ENCODE measurements at regions of chr9 and their contacts with region 1.

Region 1: DNA sequence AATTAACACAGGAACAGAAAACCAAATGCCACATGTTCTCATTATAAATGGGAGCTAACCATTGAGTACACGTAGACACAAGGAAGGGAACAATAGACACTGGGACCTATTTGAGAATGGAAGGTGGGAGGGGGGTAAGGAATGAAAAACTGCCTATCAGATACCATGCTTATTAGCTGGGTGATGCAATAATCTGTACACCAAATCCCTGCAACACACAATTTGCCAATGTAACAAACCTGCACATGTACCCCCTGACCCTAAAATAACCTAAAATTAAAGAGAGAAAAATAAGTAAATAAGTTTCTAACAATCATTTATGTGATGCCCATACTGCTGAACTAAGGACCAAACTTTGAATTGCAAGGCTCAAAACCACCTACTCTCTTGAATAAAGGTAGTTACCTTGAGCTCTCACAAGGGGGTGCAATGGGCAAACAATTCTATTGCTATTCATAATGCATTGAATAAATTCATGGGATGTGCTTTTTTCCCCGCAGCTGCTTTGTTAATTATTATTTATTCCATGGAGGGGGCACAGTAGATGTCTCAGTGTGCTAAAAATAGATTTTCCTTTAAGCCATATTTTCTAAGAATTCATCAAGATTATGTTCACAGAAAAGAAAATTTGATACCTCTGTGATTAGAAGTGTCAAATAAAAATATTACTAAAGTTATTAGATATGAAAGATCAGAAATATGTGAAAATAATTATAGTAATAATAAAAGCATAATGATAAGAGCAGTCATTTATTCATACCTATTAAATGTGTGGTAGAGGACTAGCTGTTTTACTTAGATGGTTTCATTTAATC is 76.2 kb upstream of the PTPN3 start:
- DNase-seq: peak; percentile 74
- H3K4me3 ChIP-seq: no peak overlapping the region
- H3K27ac ChIP-seq: no peak overlapping the region
- H3K4me1 ChIP-seq: no peaks in the 10 kb centered on the region
- H3K27me3 ChIP-seq: no peaks in the 10 kb centered on the region
- CTCF ChIP-seq: peak; percentile 70

Region 2: DNA sequence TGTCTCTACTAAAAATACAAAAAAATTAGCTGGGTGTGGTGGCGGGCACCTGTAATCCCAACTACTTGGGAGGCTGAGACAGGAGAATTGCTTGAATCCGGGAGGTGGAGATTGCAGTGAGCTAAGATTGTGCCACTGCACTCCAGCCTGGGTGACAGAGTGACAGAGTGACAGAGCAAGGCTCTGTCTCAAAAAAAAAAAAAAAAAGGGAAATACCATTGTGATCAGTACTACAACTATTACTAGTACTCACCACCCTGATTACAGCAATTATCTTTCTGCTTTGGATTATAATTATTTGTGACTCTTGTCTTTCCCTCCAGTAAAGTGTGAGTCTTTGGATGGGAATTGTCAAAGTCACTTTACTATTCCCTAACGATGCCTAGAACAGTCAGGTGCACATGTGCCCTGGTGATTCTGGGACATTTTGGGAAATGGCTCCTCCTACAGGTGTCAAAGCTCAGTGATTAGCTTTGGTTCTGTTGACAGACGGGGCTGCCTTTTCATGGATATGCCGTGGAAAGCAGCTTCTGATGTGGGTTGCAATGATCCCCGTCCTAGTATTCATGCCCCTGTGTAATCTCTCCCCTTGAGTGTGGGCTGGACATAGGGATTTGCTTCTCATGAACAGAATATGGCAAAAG is 375.4 kb before region 1 on chr9:
- CTCF ChIA-PET with region 1: no interaction called
- POLR2A ChIA-PET with region 1: no interaction called
- intact Hi-C with region 1: no loop called
- DNase-seq: no peak
- H3K4me3 ChIP-seq: no peak overlapping the region
- H3K27ac ChIP-seq: no peak overlapping the region
- H3K4me1 ChIP-seq: no peaks in the 10 kb centered on the region
- H3K27me3 ChIP-seq: peaks cover 3% of the 10 kb centered on the region
- CTCF ChIP-seq: 0 out of 2 replicates have a peak, but pooled peaks have one; percentile 18

Region 3: GRCh38 chr9:109652964-109653363 is 78.7 kb after region 1 on chr9:
- CTCF ChIA-PET with region 1: interaction called, 3 read pairs
- POLR2A ChIA-PET with region 1: no interaction called
- intact Hi-C with region 1: loop called (anchors 1 kb)
- DNase-seq: peak; percentile 29
- H3K4me3 ChIP-seq: no peak overlapping the region
- H3K27ac ChIP-seq: no peak overlapping the region
- H3K4me1 ChIP-seq: no peaks in the 10 kb centered on the region
- H3K27me3 ChIP-seq: no peaks in the 10 kb centered on the region
- CTCF ChIP-seq: peak; percentile 62

Region 4: DNA sequence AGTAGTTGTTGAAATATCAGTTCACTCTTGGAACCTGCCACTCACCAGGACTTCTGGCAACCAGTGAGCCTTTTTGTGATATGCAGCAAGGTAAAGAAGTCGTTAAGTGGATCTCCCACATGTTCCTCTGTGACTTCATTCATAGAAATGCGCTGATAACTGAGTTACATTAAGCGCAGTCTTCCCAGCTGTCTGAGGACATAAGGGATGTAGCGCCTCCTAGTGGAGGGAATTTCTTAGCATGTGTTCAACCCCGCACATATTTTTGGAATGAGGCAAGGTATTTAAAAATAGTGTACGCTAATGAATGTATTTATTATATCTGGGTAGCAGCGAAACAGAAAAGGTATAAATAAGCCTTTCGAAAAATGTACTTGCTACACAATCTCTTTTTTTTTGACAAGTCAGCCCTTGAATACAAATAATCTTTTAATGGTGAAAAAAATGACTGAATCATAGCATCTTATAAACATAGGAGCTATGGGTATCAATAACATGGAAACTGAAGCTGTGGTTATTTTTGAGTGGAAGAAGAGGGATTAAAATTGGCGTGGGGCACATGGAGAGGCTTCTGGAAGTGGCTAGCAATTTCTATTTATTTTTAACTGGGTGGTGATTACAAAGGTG is 243.7 kb after region 1 on chr9:
- CTCF ChIA-PET with region 1: interaction called, 22 read pairs
- POLR2A ChIA-PET with region 1: no interaction called
- intact Hi-C with region 1: loop called (anchors 2 kb)
- DNase-seq: peak; percentile 91
- H3K4me3 ChIP-seq: no peak overlapping the region
- H3K27ac ChIP-seq: no peak overlapping the region
- H3K4me1 ChIP-seq: peaks cover 9% of the 10 kb centered on the region
- H3K27me3 ChIP-seq: no peaks in the 10 kb centered on the region
- CTCF ChIP-seq: peak; percentile 84

Region 5: DNA sequence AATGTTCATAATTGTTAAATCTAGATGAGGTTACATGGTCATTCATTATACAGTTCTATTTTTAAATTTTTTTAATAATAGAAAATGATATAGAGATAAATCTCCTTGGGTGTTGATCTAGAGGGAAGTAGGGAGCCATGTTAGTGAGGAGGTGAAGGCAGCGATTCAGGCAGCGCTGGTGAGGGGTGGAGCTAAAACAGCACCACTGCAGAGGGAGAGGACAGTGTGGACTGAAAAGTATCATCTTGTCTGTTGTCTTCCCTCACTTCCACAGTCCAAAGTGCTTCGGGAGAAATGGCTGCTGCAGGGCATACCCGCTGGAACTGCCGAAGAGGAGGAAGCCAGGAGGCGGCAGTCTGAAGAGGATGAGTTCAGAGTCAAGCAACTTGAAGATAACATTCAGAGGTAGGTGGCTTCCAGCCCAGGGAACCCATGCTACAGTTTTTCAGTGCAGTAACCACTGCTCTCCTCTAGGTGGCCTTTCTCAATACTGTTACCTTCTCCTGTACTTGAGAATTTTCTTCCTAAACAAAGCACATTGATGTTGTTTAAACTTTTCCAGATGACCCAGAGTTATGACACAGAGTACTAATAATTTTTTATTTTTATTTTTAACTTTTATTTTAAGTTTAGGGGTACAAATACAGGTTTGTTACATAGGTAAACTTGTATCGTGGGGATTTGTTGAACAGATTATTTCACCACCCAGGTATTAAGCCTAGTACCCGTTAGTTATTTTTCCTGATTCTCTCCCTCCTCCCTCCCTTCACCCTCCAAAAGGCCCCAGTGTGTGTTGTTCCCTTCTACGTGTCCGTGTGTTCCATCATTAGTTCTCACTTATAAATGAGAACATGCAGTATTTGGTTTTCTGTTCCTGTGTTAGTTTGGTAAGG is 306.2 kb after region 1 on chr9:
- CTCF ChIA-PET with region 1: no interaction called
- POLR2A ChIA-PET with region 1: no interaction called
- intact Hi-C with region 1: loop called (anchors 10 kb)
- DNase-seq: peak; percentile 51
- H3K4me3 ChIP-seq: no peak overlapping the region
- H3K27ac ChIP-seq: no peak overlapping the region
- H3K4me1 ChIP-seq: no peaks in the 10 kb centered on the region
- H3K27me3 ChIP-seq: no peaks in the 10 kb centered on the region
- CTCF ChIP-seq: peak; percentile 71

Region 6: GRCh38 chr9:110058304-110058953 is 484.2 kb after region 1 on chr9:
- CTCF ChIA-PET with region 1: no interaction called
- POLR2A ChIA-PET with region 1: no interaction called
- intact Hi-C with region 1: loop called (anchors 2 kb)
- DNase-seq: peak; percentile 65
- H3K4me3 ChIP-seq: no peak overlapping the region
- H3K27ac ChIP-seq: no peak overlapping the region
- H3K4me1 ChIP-seq: no peaks in the 10 kb centered on the region
- H3K27me3 ChIP-seq: no peaks in the 10 kb centered on the region
- CTCF ChIP-seq: peak; percentile 57

Region 7: DNA sequence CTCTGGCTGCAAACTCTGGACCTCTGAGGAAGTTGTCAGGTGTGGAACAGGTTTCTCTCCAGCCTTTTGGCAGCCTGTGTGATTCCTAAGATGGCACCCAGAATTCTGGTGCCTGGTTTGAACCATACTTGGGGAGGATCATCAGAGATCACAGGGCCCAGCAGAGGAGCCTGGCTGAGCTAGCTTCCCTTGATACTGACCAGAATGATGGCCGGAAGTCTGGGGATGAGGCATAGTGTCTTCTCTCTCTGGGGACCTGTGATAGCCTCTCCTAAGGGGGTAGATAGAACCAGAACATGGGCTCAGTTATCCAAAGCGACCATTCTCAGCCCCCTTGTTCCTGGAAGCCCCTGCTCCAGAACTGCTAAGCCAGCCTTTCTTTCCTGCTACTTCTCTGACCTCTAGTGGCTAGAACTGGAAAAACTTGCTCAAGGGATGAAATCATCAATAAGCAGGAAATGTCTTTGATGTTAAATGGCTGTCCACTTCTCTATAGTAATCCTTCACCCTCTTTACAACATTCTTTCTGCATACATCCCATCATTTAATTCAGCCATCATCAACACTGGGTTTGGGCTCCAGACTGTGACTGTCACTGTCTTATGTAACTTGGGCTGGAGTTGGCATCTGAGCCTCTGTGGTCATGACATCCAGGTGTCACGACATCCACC is 578.6 kb after region 1 on chr9:
- CTCF ChIA-PET with region 1: interaction called, 4 read pairs
- POLR2A ChIA-PET with region 1: no interaction called
- intact Hi-C with region 1: loop called (anchors 1 kb)
- DNase-seq: peak; percentile 74
- H3K4me3 ChIP-seq: no peak overlapping the region
- H3K27ac ChIP-seq: no peak overlapping the region
- H3K4me1 ChIP-seq: no peaks in the 10 kb centered on the region
- H3K27me3 ChIP-seq: no peaks in the 10 kb centered on the region
- CTCF ChIP-seq: peak; percentile 79